H1 (cell line): ENCODE measurements at regions of chr10 and their contacts with region 1.

Region 1: DNA sequence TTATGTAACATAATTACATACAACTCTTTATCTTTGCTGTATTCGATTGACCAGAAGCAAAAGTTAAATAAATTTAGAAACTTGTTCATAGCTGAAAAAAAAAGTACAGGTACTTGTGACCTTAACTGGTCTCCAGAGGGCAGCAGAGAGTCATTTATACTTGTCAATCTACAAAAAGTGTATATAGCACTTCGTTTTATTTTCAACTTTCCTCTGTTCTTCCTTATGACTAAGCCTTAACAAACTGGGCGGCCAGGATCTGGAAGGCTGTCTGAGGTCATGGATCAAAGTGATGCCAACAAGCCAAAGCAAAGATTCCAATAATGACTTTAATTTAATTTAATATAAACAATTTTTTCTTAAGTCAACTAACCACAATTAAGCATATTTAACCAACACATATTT is 29.8 kb downstream of the C10orf67 start:
- DNase-seq: no peak
- H3K4me3 ChIP-seq: no peak overlapping the region
- H3K27ac ChIP-seq: no peak overlapping the region
- H3K4me1 ChIP-seq: no peaks in the 10 kb centered on the region
- H3K27me3 ChIP-seq: no peaks in the 10 kb centered on the region
- CTCF ChIP-seq: peak in 2 of 3 experiments; percentile 47 to 59; a peak in 2 of 4 replicates
- EP300 ChIP-seq: no peak
- POLR2A ChIP-seq: no peak
- RAD21 ChIP-seq: peak; percentile 71 to 72

Region 2: DNA sequence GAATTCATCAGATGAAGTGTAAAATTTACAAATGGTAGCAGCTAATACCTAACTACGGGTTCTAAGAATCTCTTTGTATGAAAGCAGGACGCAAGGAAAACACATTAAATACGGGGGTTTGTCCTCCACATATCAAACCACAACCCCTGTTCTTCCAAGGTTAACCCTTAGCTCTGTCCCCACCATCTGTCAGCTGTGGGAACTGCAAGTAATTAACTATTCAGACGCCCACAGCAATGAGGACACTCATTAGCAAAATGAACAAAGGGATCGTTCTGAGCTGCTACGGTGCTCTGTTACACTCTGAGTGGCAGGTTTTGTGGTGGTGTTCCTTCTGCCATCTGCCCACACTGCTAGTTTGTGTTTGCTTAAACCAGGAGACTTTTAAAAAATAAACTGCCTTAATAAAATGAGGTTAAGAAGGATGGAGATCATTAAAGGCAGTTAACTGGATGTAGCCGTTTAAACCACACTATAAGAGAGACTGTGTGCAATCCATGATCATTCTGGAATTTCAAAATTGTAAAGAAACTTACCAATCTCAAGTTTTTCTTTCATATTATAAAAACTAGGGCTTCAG is 21.6 kb before region 1 on chr10:
- CTCF ChIA-PET with region 1: interaction called, 61 read pairs
- POLR2A ChIA-PET with region 1: no interaction called
- DNase-seq: peak; percentile 36 to 80
- H3K4me3 ChIP-seq: no peak overlapping the region
- H3K27ac ChIP-seq: no peak overlapping the region
- H3K4me1 ChIP-seq: no peaks in the 10 kb centered on the region
- H3K27me3 ChIP-seq: peaks cover 0 to 1% (median 0%) of the 10 kb centered on the region in 4 experiments; a peak in 1 of 7 replicates
- CTCF ChIP-seq: peak; percentile 20 to 92 (median 82)
- EP300 ChIP-seq: no peak
- POLR2A ChIP-seq: no peak
- RAD21 ChIP-seq: peak; percentile 90 to 93

Region 3: DNA sequence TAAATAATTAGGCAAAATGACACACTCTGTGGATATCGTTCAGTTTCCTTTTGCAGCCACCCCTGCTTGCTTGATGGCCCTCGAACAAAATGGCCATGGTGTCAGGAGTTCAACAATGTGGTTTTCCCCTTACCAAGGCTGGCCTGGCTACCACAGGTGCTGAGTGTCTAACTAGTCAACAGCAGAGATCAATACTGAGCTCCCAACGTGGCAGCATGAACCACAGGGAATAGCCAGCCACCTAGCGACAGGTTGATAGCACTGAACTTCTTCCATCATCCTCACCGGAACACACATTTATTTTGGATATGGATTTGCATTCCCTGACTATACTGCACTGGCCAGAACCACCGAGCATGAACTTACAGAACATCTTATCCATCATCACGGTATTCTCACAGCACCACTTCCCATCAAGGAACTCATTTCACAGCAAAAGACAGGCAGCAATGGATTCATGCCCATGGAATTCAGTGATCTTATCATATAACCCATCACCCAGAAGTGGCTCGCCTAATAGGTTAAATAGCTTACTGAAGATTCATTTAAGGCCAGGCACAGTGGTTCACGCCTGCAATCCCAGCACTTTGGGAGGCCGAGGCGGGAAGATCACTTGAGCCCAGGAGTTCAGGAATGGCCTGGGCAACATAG is 23.5 kb after region 1 on chr10:
- CTCF ChIA-PET with region 1: interaction called, 18 read pairs
- POLR2A ChIA-PET with region 1: no interaction called
- DNase-seq: no peak
- H3K4me3 ChIP-seq: no peak overlapping the region
- H3K27ac ChIP-seq: no peak overlapping the region
- H3K4me1 ChIP-seq: peaks cover 2 to 4% (median 3%) of the 10 kb centered on the region in 4 experiments; a peak in 4 of 7 replicates
- H3K27me3 ChIP-seq: peaks cover 2 to 11% (median 4%) of the 10 kb centered on the region in 4 experiments; a peak in 5 of 7 replicates
- CTCF ChIP-seq: peak; percentile 45 to 65 (median 56)
- EP300 ChIP-seq: no peak
- POLR2A ChIP-seq: no peak
- RAD21 ChIP-seq: peak; percentile 41 to 64

Region 4: GRCh38 chr10:23516530-23516929 is 201.7 kb after region 1 on chr10:
- CTCF ChIA-PET with region 1: interaction called, 20 read pairs
- POLR2A ChIA-PET with region 1: no interaction called
- DNase-seq: no peak
- H3K4me3 ChIP-seq: no peak overlapping the region
- H3K27ac ChIP-seq: no peak overlapping the region
- H3K4me1 ChIP-seq: no peaks in the 10 kb centered on the region
- H3K27me3 ChIP-seq: no peaks in the 10 kb centered on the region
- CTCF ChIP-seq: peak in 2 of 3 experiments; percentile 70 to 71; a peak in 3 of 4 replicates
- EP300 ChIP-seq: no peak
- POLR2A ChIP-seq: no peak
- RAD21 ChIP-seq: peak; percentile 84

Region 5: GRCh38 chr10:23656735-23657134 is 341.9 kb after region 1 on chr10:
- CTCF ChIA-PET with region 1: interaction called, 23 read pairs
- POLR2A ChIA-PET with region 1: no interaction called
- DNase-seq: no peak
- H3K4me3 ChIP-seq: no peak overlapping the region
- H3K27ac ChIP-seq: no peak overlapping the region
- H3K4me1 ChIP-seq: no peaks in the 10 kb centered on the region
- H3K27me3 ChIP-seq: no peaks in the 10 kb centered on the region
- CTCF ChIP-seq: peak in 2 of 3 experiments; percentile 60 to 65; a peak in 3 of 4 replicates
- EP300 ChIP-seq: no peak
- POLR2A ChIP-seq: no peak
- RAD21 ChIP-seq: peak; percentile 71 to 79